ENCODE measurements at regions of chr21 and their contacts with region 1.

Region 1: DNA sequence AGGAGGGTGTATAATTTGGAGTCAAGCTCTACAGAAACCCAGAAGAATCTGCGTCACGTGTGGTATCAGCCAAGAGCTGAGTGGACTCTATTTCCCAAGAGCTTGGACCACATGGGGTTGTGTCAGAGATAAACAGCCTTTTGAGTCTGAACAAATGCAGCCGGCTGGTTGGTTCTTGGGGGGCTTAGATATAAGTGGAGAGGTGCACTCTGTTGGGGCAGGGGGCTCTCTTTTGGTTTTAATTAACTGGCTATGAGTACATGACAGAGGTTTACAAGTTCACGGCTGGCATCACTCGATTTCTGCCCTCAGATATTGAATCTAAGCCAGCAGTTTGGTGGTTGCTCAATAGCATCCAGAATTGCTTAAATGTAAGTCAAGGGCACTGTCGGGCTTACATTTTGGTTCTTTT is 501 bp upstream of the MRAP start:
- DNase-seq: no peak
- H3K4me3 ChIP-seq: no peak overlapping the region
- H3K27ac ChIP-seq: no peak overlapping the region
- H3K4me1 ChIP-seq: no peaks in the 10 kb centered on the region
- H3K27me3 ChIP-seq: no peaks in the 10 kb centered on the region
- CTCF ChIP-seq: no peak
- EP300 ChIP-seq: no peak
- POLR2A ChIP-seq: no peak

Region 2: GRCh38 chr21:32226444-32226843 is 71.7 kb before region 1 on chr21:
- in situ Hi-C with region 1: no loop called
- intact Hi-C with region 1: no loop called
- DNase-seq: no peak
- H3K4me3 ChIP-seq: no peak overlapping the region
- H3K27ac ChIP-seq: no peak overlapping the region
- H3K4me1 ChIP-seq: no peaks in the 10 kb centered on the region
- H3K27me3 ChIP-seq: no peaks in the 10 kb centered on the region
- CTCF ChIP-seq: no peak
- EP300 ChIP-seq: no peak
- POLR2A ChIP-seq: no peak

Region 3: DNA sequence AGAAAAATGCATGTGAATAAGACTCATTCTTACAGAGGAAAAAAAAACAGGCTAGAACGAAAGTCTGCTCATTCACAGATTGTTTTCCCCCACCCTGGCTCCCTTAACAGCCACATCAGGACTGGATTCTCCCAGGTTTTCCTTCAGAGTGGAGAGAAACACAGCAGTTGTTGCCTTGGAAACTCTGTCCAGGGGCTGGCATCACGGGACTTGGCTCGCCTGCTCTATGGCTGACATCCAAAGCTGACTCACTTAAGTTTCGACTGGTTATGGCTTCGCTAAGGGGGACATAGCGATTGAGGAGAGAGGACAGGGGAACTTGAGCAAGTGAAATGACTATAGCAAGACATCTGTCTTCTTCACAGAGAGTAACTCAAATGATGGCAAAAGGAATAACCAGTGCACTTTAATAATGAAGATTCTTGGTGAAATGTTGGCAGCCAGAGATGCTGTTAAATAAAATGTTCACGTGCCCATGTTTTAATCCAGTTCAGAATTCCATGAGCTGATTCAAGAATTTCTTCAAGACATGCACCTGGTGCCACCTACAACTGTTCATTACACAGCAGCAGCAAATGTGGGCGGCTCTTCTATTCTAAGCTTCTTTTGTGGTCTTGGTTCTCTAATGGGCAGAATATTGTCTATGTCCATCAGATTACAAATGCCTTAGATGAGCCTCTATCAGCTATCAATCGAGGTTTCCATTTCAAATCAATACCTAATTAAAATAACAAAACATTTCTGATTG is 41.1 kb before region 1 on chr21:
- in situ Hi-C with region 1: no loop called
- intact Hi-C with region 1: no loop called
- DNase-seq: peak; percentile 53
- H3K4me3 ChIP-seq: no peak overlapping the region
- H3K27ac ChIP-seq: peak overlapping the region; percentile 8 to 44 (median 27)
- H3K4me1 ChIP-seq: peaks cover 0 to 22% (median 0%) of the 10 kb centered on the region in 4 donors
- H3K27me3 ChIP-seq: no peaks in the 10 kb centered on the region
- CTCF ChIP-seq: no peak
- EP300 ChIP-seq: no peak
- POLR2A ChIP-seq: no peak

Region 4: DNA sequence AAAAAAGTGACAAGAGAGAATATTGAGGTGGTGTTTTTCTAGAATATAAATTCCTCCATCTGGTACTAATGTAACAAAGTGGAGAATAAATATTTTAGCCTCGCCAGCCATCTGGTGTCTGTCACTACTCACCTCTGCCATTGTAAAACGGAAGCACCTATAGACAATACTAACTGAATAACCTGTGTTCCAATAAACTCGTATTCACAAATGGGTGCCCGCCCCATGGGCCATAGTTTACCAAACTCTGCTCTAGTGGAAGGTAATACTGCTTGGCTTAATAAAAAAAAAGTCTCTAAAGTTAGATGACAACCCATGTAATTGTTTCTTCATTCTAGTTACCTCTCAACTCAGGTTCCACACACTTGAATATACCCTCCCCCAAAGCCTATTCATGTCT is 27.4 kb before region 1 on chr21:
- in situ Hi-C with region 1: no loop called
- intact Hi-C with region 1: loop called (anchors 1 kb)
- DNase-seq: no peak
- H3K4me3 ChIP-seq: no peak overlapping the region
- H3K27ac ChIP-seq: no peak overlapping the region
- H3K4me1 ChIP-seq: no peaks in the 10 kb centered on the region
- H3K27me3 ChIP-seq: no peaks in the 10 kb centered on the region
- CTCF ChIP-seq: no peak
- EP300 ChIP-seq: no peak
- POLR2A ChIP-seq: no peak

Region 5: GRCh38 chr21:32325706-32326105 is 27.6 kb after region 1 on chr21:
- in situ Hi-C with region 1: no loop called
- intact Hi-C with region 1: loop called (anchors 1 kb)
- DNase-seq: no peak
- H3K4me3 ChIP-seq: no peak overlapping the region
- H3K27ac ChIP-seq: no peak overlapping the region
- H3K4me1 ChIP-seq: no peaks in the 10 kb centered on the region
- H3K27me3 ChIP-seq: no peaks in the 10 kb centered on the region
- CTCF ChIP-seq: no peak
- EP300 ChIP-seq: no peak
- POLR2A ChIP-seq: no peak

Region 6: DNA sequence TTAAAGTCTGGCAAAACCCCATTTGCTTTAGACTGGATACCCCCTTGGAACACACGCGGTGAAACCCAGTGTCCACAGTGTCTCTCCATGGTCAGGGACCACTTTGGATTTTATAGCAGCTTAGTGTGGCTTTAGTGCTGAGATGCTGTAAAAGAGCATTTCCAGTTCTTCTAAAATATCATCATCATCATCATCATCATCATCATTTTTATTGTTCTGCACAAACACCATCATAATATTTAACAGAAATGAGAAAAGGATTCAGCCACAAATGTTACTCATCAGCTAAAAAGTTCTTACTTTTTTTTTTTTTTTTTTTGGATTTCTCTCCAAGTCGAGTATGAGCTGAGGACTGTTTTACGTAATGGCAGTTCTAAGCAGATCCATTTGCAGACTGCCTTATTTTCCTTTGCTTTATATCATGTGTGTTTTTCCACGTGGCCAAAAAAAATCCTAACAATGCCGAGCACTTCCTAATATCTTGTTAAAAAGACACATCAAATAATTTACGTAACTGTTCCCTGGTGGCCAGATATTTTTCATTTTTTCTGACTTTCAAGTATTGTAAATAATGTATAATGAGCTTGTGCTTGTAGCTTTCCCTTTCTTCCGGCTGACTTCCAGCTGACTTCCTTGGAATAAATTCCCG is 177.1 kb after region 1 on chr21:
- in situ Hi-C with region 1: no loop called
- intact Hi-C with region 1: no loop called
- DNase-seq: no peak
- H3K4me3 ChIP-seq: no peak overlapping the region
- H3K27ac ChIP-seq: peak overlapping the region; percentile 53 to 76 (median 69)
- H3K4me1 ChIP-seq: peaks cover 2 to 29% (median 13%) of the 10 kb centered on the region in 4 donors
- H3K27me3 ChIP-seq: no peaks in the 10 kb centered on the region
- CTCF ChIP-seq: no peak
- EP300 ChIP-seq: no peak
- POLR2A ChIP-seq: no peak

Measured in transverse colon (tissue), 4 donors.